Tibial artery (tissue), 4 donors: ENCODE measurements at regions of chr12 and their contacts with region 1.

Region 1: GRCh38 chr12:101238800-101239329 is 28.8 kb upstream of the SLC5A8 start:
- DNase-seq: no peak
- H3K4me3 ChIP-seq: no peak overlapping the region
- H3K27ac ChIP-seq: no peak overlapping the region
- H3K4me1 ChIP-seq: no peaks in the 10 kb centered on the region
- H3K27me3 ChIP-seq: peaks cover 0 to 4% of the 10 kb centered on the region in 2 donors
- CTCF ChIP-seq: no peak

Region 2: DNA sequence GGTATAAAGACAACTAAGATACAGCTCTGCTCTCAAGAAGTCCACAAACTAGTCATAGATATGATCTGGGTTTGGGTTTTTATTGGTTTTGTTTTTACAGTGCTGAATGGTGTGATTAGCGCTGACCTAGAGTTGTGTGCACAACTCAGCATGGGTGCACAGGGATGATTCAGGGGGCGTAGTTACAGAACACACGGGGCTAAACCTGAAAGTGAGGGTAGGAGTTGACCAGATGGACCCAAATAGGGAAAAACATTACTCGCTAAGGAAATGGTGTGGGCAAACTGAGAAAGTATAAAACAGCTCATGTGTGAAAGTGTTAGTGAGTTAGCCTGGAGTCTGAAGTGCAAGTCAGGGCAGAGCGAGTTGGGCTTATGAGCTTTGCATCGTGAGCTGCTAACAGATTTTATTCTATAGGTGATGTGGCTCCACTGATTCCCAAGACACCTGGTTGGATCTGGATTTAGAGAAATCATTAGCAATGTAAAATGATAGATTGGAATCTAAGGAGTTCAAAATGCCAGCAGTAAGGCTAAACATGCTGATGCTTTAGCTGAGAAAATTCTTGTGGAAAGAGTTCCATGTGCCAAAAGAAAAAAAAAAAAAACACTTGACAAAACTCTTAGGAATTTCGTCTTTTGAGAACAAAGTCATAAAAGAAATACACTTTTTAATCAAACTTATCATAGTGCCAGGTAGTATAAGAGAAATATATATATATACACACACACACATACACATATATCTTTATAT is 163.8 kb before region 1 on chr12:
- intact Hi-C with region 1: loop called (anchors 5 kb)
- DNase-seq: no peak
- H3K4me3 ChIP-seq: no peak overlapping the region
- H3K27ac ChIP-seq: peak overlapping the region in 1 of 2 donors; percentile 70
- H3K4me1 ChIP-seq: peaks cover 0 to 32% (median 14%) of the 10 kb centered on the region in 4 donors
- H3K27me3 ChIP-seq: no peaks in the 10 kb centered on the region
- CTCF ChIP-seq: no peak